HEK293T (cell line): ENCODE measurements at regions of chr6 and their contacts with region 1.

Region 1: DNA sequence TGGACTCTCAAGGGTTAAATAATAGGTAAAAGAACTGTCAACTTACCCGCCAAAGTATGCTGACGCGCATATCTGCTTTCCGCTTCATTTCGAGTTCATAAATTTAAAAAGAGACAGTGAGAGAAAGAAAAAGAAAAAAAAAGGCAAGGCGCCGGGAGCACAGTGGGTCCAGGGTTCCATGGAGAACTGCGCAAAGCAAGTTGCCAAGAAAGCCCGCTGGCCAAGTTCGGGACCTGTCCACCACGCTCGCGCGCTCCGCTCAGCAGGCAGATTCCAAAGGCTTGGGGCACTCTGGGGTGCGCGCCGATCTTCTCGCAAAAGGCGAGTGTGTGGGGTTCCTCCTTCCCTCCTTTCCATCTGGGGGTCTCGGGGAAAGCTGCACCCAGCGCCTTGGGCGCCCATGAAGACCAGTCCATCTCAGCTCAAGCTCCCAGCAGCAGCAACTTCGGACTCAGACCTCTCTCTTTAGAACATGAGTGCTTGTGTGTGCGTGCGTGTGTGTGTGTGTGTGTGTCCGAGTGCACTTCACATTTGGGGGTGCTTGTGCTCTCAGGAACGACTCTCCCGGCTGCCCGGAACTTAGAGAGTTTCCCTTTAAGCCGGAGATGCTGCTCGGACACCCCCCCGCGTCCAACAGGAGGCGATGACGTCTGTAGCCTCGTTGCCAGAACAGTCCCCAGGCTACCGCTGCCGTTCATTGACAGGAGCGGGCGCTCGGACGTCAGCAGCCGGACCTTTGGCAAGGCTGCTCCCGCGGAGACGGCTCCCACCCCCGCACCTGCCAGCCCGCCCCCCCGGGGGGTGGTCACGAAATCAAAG is 180.0 kb downstream of the TBXT start:
- DNase-seq: peak; percentile 78

Region 2: GRCh38 chr6:165895421-165896165 is 92.1 kb before region 1 on chr6:
- CTCF ChIA-PET with region 1: no interaction called
- POLR2A ChIA-PET with region 1: no interaction called
- DNase-seq: no peak

Region 3: GRCh38 chr6:165967768-165968408 is 19.8 kb before region 1 on chr6:
- CTCF ChIA-PET with region 1: no interaction called
- POLR2A ChIA-PET with region 1: no interaction called
- DNase-seq: no peak

Region 4: DNA sequence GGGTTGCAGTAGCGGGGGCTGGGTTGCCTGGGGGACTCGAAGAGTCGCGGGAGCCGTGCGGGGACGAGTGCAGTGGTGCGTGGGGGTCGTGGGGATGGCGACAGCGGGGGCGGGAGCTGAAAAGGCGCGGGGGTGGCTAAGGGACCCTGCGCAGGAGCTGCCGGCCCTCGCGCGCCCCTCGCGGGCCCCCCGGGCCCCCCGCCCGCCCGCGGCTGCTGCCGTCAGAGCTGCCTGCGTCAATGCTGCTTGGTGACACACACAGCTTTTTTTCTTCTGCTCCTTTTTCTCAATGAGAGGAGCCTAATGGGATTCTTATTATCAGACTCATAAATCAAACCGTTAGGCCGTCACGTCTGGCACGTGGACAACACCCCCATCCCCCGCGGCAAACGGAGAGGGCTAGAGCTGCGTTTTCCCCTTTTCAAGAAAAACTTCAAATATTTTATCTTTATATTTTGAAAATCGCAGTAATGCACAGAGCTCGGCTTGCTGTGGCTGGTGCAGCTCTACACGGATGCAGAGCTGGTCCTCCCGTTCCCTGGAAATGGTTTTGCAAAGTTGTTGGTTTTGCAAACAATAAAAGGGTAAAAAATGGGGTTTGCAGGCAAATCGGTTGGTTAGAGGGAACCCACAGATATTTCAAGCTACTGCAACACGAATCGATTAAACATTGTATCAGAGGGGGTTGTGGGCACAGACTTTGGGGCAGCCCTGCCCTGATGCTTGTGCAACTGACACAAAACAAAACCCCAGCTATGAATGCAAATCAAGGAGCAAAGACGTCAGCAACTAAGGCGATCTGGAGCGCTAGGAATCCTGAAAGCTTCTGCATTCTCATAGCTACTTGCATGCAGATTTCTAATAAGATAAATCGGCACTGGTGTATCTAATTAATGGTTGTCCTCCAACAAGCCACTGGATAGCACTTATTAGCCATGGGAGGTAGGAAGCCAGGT is 18.5 kb after region 1 on chr6:
- CTCF ChIA-PET with region 1: no interaction called
- POLR2A ChIA-PET with region 1: interaction called, 12 read pairs
- DNase-seq: peak; percentile 83

Region 5: DNA sequence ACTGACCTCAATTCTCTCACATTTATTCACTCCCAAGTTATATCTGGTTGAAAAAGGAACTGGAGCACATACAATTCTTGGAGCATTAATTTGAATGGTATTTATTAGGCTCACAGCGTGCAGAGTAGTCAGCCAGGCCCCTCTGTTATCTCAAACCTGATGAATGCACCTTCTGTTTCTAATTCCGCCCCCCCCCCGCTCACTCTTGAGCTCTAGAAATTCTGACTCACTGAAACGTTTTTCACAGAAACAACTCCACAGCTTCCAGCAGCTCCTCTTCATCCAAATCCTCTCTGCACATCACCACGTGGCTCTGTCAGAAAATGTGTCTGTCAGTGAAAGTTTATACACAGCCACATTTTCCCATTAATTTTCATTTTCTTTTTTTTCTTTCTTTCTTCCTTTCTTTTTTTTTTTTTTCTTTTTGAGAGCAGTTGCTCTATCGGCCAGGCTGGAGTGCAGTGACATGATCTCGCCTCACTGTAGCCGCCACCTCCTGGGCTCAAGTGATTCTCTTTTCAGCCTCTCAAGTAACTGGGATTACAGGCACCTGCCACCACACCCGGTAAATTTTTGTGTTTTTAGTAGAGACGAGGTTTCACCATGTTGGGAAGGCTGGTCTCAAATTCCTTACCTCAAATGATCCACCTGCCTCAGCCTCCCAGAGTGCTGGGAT is 70.5 kb after region 1 on chr6:
- CTCF ChIA-PET with region 1: no interaction called
- POLR2A ChIA-PET with region 1: no interaction called
- DNase-seq: no peak